ENCODE measurements at regions of chr15 and their contacts with region 1.

Region 1: GRCh38 chr15:31435261-31435911 is 108.8 kb downstream of the KLF13 start:
- DNase-seq: peak; percentile 84 to 95 (median 86)
- H3K4me3 ChIP-seq: peak overlapping the region; percentile 25 to 74
- H3K4me3 Mint-ChIP-seq: peak overlapping the region; percentile 82 to 92 (median 87)
- H3K27ac ChIP-seq: peak overlapping the region; percentile 86
- H3K27ac Mint-ChIP-seq: peak overlapping the region; percentile 93 to 99 (median 98)
- H3K4me1 ChIP-seq: peaks cover 74% of the 10 kb centered on the region
- H3K4me1 Mint-ChIP-seq: peaks cover 58 to 87% (median 69%) of the 10 kb centered on the region in 4 donors
- H3K27me3 ChIP-seq: no peaks in the 10 kb centered on the region
- H3K27me3 Mint-ChIP-seq: no peaks in the 10 kb centered on the region

Region 2: GRCh38 chr15:30991255-30992072 is 443.9 kb before region 1 on chr15 and contains the start of gene MTMR10:
- CTCF ChIA-PET with region 1: interaction called, 3 read pairs
- POLR2A ChIA-PET with region 1: no interaction called
- intact Hi-C with region 1: loop called (anchors 2 kb)
- DNase-seq: peak; percentile 70 to 84 (median 82)
- H3K4me3 ChIP-seq: peak within 1 kb of the TSS; percentile 64 to 76
- H3K4me3 Mint-ChIP-seq: peak within 1 kb of the TSS; percentile 94 to 98 (median 96)
- H3K27ac ChIP-seq: peak within 1 kb of the TSS; percentile 76
- H3K27ac Mint-ChIP-seq: peak within 1 kb of the TSS; percentile 89 to 95 (median 94)
- H3K4me1 ChIP-seq: peaks cover 30% of the 10 kb centered on the region
- H3K4me1 Mint-ChIP-seq: peaks cover 19 to 32% (median 27%) of the 10 kb centered on the region in 4 donors
- H3K27me3 ChIP-seq: no peaks in the 10 kb centered on the region
- H3K27me3 Mint-ChIP-seq: no peaks in the 10 kb centered on the region
- total RNA-seq, gene MTMR10: 29.6 to 31.8 TPM

Region 3: GRCh38 chr15:31215490-31216214 is 219.7 kb before region 1 on chr15:
- CTCF ChIA-PET with region 1: interaction called, 13 read pairs
- POLR2A ChIA-PET with region 1: interaction called, 32 read pairs
- intact Hi-C with region 1: loop called (anchors 1 kb)
- DNase-seq: peak; percentile 70 to 76 (median 72)
- H3K4me3 ChIP-seq: peak overlapping the region in 1 of 2 donors; percentile 38
- H3K4me3 Mint-ChIP-seq: peak overlapping the region; percentile 54 to 76 (median 73)
- H3K27ac ChIP-seq: peak overlapping the region; percentile 52
- H3K27ac Mint-ChIP-seq: peak overlapping the region in 6 of 7 donors; percentile 32 to 87 (median 78)
- H3K4me1 ChIP-seq: peaks cover 30% of the 10 kb centered on the region
- H3K4me1 Mint-ChIP-seq: peaks cover 18 to 34% (median 28%) of the 10 kb centered on the region in 4 donors
- H3K27me3 ChIP-seq: no peaks in the 10 kb centered on the region
- H3K27me3 Mint-ChIP-seq: no peaks in the 10 kb centered on the region

Region 4: GRCh38 chr15:31228985-31229826 is 206.2 kb before region 1 on chr15:
- CTCF ChIA-PET with region 1: no interaction called
- POLR2A ChIA-PET with region 1: no interaction called
- intact Hi-C with region 1: no loop called
- DNase-seq: no peak
- H3K4me3 ChIP-seq: no peak overlapping the region
- H3K4me3 Mint-ChIP-seq: no peak overlapping the region
- H3K27ac ChIP-seq: no peak overlapping the region
- H3K27ac Mint-ChIP-seq: peak overlapping the region in 1 of 7 donors; percentile 13
- H3K4me1 ChIP-seq: no peaks in the 10 kb centered on the region
- H3K4me1 Mint-ChIP-seq: peaks cover 11 to 22% (median 12%) of the 10 kb centered on the region in 4 donors
- H3K27me3 ChIP-seq: no peaks in the 10 kb centered on the region
- H3K27me3 Mint-ChIP-seq: no peaks in the 10 kb centered on the region

Region 5: GRCh38 chr15:31326156-31326732 is 109.1 kb before region 1 on chr15:
- CTCF ChIA-PET with region 1: interaction called, 7 read pairs
- POLR2A ChIA-PET with region 1: interaction called, 186 read pairs
- intact Hi-C with region 1: loop called (anchors 1 kb)
- DNase-seq: peak; percentile 97 to 100 (median 100)
- H3K4me3 ChIP-seq: peak overlapping the region in 1 of 2 donors; percentile 77
- H3K4me3 Mint-ChIP-seq: peak overlapping the region; percentile 53 to 90 (median 78)
- H3K27ac ChIP-seq: peak overlapping the region; percentile 92
- H3K27ac Mint-ChIP-seq: peak overlapping the region; percentile 64 to 92 (median 83)
- H3K4me1 ChIP-seq: peaks cover 43% of the 10 kb centered on the region
- H3K4me1 Mint-ChIP-seq: peaks cover 26 to 48% (median 37%) of the 10 kb centered on the region in 4 donors
- H3K27me3 ChIP-seq: no peaks in the 10 kb centered on the region
- H3K27me3 Mint-ChIP-seq: no peaks in the 10 kb centered on the region

Region 6: GRCh38 chr15:31365655-31366127 is 69.7 kb before region 1 on chr15:
- CTCF ChIA-PET with region 1: interaction called, 129 read pairs
- POLR2A ChIA-PET with region 1: interaction called, 316 read pairs
- intact Hi-C with region 1: loop called (anchors 1 kb)
- DNase-seq: peak; percentile 71 to 84 (median 77)
- H3K4me3 ChIP-seq: peak overlapping the region in 1 of 2 donors; percentile 17
- H3K4me3 Mint-ChIP-seq: peak overlapping the region; percentile 79 to 91 (median 84)
- H3K27ac ChIP-seq: peak overlapping the region; percentile 82
- H3K27ac Mint-ChIP-seq: peak overlapping the region; percentile 91 to 98 (median 96)
- H3K4me1 ChIP-seq: peaks cover 99% of the 10 kb centered on the region
- H3K4me1 Mint-ChIP-seq: peaks cover 70 to 100% (median 92%) of the 10 kb centered on the region in 4 donors
- H3K27me3 ChIP-seq: no peaks in the 10 kb centered on the region
- H3K27me3 Mint-ChIP-seq: no peaks in the 10 kb centered on the region

Region 7: DNA sequence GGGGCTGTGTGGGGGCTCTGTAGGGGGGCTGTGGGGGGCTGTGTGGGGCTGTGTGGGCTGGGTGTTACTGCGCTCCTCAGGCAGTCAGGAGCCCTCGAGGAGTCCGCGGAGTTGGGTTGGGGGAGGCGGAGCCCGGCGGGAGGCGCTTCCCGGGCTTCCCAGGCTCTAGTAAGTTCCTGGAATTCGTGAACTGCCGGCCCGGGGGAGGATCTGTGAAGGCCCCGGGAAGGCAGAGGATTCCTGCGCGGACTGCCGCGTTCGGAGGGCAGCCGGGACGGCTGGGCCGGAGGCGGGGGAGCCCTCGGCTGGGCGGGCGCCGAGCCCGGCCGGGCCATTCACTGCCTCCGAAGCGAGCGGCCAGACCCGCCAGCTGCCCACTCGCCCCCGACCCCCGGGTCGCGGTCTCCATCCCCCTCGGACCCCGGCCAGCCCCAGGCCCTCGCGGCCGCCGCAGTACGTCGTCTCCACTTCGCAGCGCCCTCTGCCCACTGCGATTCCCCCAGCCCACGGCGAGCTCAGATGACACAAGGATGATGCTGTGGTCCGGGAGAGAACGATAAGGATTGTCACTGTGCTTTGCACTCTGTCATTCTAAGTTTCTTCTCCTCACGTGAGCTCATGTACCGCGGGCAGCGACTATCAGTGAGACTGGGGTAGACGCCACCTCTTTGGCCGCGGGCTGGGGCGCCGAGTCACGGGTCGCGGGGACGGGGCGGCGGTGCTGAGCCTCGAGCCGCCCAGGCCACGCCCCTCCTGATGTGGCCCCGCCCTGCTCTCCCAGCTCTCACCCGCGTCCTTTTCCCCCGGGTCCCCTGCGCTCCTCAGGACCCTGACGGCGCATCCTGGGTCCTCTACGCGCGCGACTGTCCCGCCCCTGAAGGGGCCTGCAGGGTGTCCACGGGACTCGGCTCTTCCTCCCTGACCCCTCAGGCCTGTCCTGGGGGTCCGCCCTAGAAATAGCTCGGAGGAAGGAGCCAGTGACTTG is 43.4 kb before region 1 on chr15:
- CTCF ChIA-PET with region 1: interaction called, 21 read pairs
- POLR2A ChIA-PET with region 1: interaction called, 169 read pairs
- intact Hi-C with region 1: loop called (anchors 1 kb)
- DNase-seq: peak; percentile 78 to 87 (median 79)
- H3K4me3 ChIP-seq: peak overlapping the region; percentile 65 to 77
- H3K4me3 Mint-ChIP-seq: peak overlapping the region; percentile 87 to 96 (median 92)
- H3K27ac ChIP-seq: peak overlapping the region; percentile 57
- H3K27ac Mint-ChIP-seq: peak overlapping the region; percentile 81 to 98 (median 93)
- H3K4me1 ChIP-seq: peaks cover 28% of the 10 kb centered on the region
- H3K4me1 Mint-ChIP-seq: peaks cover 28 to 60% (median 39%) of the 10 kb centered on the region in 4 donors
- H3K27me3 ChIP-seq: no peaks in the 10 kb centered on the region
- H3K27me3 Mint-ChIP-seq: no peaks in the 10 kb centered on the region

Region 8: DNA sequence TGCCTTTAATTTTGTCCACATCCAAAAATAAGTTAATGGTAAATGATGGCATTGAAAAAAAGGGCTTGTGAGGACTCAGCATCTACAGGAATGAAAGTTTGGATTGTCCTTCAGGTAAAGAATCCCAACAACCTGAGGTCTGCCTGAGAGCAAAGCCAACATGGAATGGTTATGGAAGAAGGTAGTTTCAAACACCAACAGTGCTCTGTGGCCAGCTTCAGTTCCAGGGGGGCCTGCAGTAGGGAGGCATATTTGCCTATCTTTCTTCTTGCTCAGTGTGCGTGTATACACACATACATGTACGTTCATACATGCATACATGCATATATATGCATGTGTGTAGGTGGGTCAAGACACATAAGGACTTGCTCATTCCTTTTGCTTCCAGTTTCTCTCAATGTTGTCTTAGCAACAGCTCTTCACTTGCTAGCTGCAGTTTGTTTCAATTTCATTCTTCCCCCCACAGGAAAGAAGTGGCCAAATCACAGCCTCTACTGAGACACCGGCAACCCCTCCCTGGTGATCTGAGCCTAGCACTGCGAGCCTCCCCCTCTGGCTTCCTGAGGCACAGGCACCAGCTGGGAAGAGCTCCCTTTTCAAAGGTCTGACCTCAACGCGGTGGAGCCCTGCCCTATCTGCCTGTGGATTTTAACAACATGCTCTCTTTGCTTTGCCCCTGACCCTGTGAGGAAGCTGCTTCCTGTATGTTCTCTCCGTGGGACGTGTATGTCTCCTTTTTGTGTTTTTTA is 37.4 kb after region 1 on chr15:
- CTCF ChIA-PET with region 1: interaction called, 50 read pairs
- POLR2A ChIA-PET with region 1: interaction called, 96 read pairs
- intact Hi-C with region 1: loop called (anchors 1 kb)
- DNase-seq: peak; percentile 56 to 69 (median 62)
- H3K4me3 ChIP-seq: peak overlapping the region; percentile 12 to 41
- H3K4me3 Mint-ChIP-seq: peak overlapping the region; percentile 60 to 89 (median 79)
- H3K27ac ChIP-seq: peak overlapping the region; percentile 51
- H3K27ac Mint-ChIP-seq: peak overlapping the region; percentile 80 to 96 (median 94)
- H3K4me1 ChIP-seq: peaks cover 42% of the 10 kb centered on the region
- H3K4me1 Mint-ChIP-seq: peaks cover 31 to 57% (median 47%) of the 10 kb centered on the region in 4 donors
- H3K27me3 ChIP-seq: no peaks in the 10 kb centered on the region
- H3K27me3 Mint-ChIP-seq: no peaks in the 10 kb centered on the region

Region 9: GRCh38 chr15:31554261-31554660 is 118.9 kb after region 1 on chr15:
- CTCF ChIA-PET with region 1: no interaction called
- POLR2A ChIA-PET with region 1: no interaction called
- intact Hi-C with region 1: no loop called
- DNase-seq: no peak
- H3K4me3 ChIP-seq: no peak overlapping the region
- H3K4me3 Mint-ChIP-seq: no peak overlapping the region
- H3K27ac ChIP-seq: no peak overlapping the region
- H3K27ac Mint-ChIP-seq: no peak overlapping the region
- H3K4me1 ChIP-seq: no peaks in the 10 kb centered on the region
- H3K4me1 Mint-ChIP-seq: no peaks in the 10 kb centered on the region
- H3K27me3 ChIP-seq: no peaks in the 10 kb centered on the region
- H3K27me3 Mint-ChIP-seq: peaks cover 5 to 8% of the 10 kb centered on the region in 2 donors